Activated T-helper 2 cell treated with anti-CD3 and anti-CD28 coated beads, Interferon-gamma antibody, Interleukin-2, Interleukin-4, amounts not matched to agents 10 μg/mL and 5 μg/mL and 100 μg/mL, durations not matched to agents 14 hours and 24 hours and 36 hours (primary cell): ENCODE measurements at regions of chr5 and their contacts with region 1.

Region 1: GRCh38 chr5:146213210-146213826 is 9.9 kb downstream of the RBM27 start:
- DNase-seq: no peak
- H3K4me3 Mint-ChIP-seq: no peak overlapping the region
- H3K27ac Mint-ChIP-seq: no peak overlapping the region
- H3K4me1 Mint-ChIP-seq: peaks cover 28% of the 10 kb centered on the region
- H3K27me3 Mint-ChIP-seq: no peaks in the 10 kb centered on the region

Region 2: GRCh38 chr5:146173597-146173996 is 39.7 kb before region 1 on chr5:
- intact Hi-C with region 1: loop called (anchors 5 kb)
- DNase-seq: no peak
- H3K4me3 Mint-ChIP-seq: peak overlapping the region; percentile 43
- H3K27ac Mint-ChIP-seq: peak overlapping the region; percentile 62
- H3K4me1 Mint-ChIP-seq: peaks cover 13% of the 10 kb centered on the region
- H3K27me3 Mint-ChIP-seq: no peaks in the 10 kb centered on the region

Region 3: DNA sequence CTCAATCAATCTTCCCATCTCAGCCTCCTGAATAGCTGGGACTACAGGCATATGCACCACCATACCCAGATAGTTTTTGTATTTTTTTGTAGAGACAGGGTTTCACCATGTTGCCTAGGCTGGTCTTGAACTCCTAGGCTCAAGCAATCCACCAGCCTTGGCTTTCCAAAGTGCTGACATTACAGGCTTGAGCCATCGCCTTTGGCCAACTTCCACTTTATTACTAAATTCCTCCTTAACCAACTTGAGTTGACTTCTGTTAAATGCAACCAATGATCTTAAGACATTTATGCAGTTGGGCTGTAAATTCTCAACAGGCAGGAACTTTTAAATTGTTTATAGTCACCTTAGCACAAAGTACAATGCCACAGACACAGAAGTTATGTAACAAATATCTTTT is 33.6 kb before region 1 on chr5:
- intact Hi-C with region 1: loop called (anchors 5 kb)
- DNase-seq: no peak
- H3K4me3 Mint-ChIP-seq: no peak overlapping the region
- H3K27ac Mint-ChIP-seq: no peak overlapping the region
- H3K4me1 Mint-ChIP-seq: peaks cover 9% of the 10 kb centered on the region
- H3K27me3 Mint-ChIP-seq: no peaks in the 10 kb centered on the region